ENCODE measurements at regions of chr11 and their contacts with region 1.

Region 1: GRCh38 chr11:9506489-9507276 is 45.9 kb downstream of the ZNF143 start:
- DNase-seq: peak; percentile 63 to 68 (median 65)
- H3K4me3 ChIP-seq: no peak overlapping the region
- H3K4me3 Mint-ChIP-seq: no peak overlapping the region
- H3K27ac ChIP-seq: no peak overlapping the region
- H3K27ac Mint-ChIP-seq: peak overlapping the region in 3 of 7 donors; percentile 62 to 73 (median 67)
- H3K4me1 ChIP-seq: peaks cover 10% of the 10 kb centered on the region
- H3K4me1 Mint-ChIP-seq: peaks cover 9 to 18% (median 12%) of the 10 kb centered on the region in 4 donors
- H3K27me3 ChIP-seq: no peaks in the 10 kb centered on the region
- H3K27me3 Mint-ChIP-seq: no peaks in the 10 kb centered on the region

Region 2: GRCh38 chr11:8911029-8911826 is 595.5 kb before region 1 on chr11 and contains the start of gene AKIP1:
- CTCF ChIA-PET with region 1: interaction called, 6 read pairs
- POLR2A ChIA-PET with region 1: interaction called, 3 read pairs
- intact Hi-C with region 1: loop called (anchors 1 kb)
- DNase-seq: peak; percentile 63 to 78 (median 65)
- H3K4me3 ChIP-seq: peak within 1 kb of the TSS; percentile 76 to 79
- H3K4me3 Mint-ChIP-seq: peak within 1 kb of the TSS; percentile 91 to 97 (median 92)
- H3K27ac ChIP-seq: peak within 1 kb of the TSS; percentile 52
- H3K27ac Mint-ChIP-seq: peak within 1 kb of the TSS; percentile 57 to 94 (median 89)
- H3K4me1 ChIP-seq: peaks cover 38% of the 10 kb centered on the region
- H3K4me1 Mint-ChIP-seq: peaks cover 27 to 60% (median 41%) of the 10 kb centered on the region in 4 donors
- H3K27me3 ChIP-seq: no peaks in the 10 kb centered on the region
- H3K27me3 Mint-ChIP-seq: no peaks in the 10 kb centered on the region
- total RNA-seq, gene AKIP1: 13.3 to 14.5 TPM

Region 3: DNA sequence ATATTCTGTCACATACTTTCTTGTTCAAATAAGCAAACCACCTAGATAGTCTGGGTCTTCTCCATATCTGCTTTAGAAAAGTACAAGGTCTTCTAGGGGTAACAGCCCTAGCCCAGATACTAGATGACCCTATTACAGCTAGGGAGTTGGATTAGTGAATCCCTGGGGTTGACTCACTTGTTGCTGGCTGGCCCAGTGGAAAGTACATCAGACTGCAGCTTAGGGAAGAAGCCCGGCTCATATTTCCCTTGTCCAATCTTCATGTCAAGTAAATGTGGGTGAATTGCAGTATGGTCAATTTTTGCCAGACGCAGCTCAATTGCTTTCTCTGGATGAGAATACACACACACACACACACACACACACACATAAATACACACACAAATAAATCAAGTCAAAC is 336.2 kb before region 1 on chr11:
- CTCF ChIA-PET with region 1: interaction called, 123 read pairs
- POLR2A ChIA-PET with region 1: no interaction called
- intact Hi-C with region 1: loop called (anchors 1 kb)
- DNase-seq: no peak
- H3K4me3 ChIP-seq: no peak overlapping the region
- H3K4me3 Mint-ChIP-seq: no peak overlapping the region
- H3K27ac ChIP-seq: no peak overlapping the region
- H3K27ac Mint-ChIP-seq: peak overlapping the region in 1 of 7 donors; percentile 69
- H3K4me1 ChIP-seq: no peaks in the 10 kb centered on the region
- H3K4me1 Mint-ChIP-seq: peaks cover 0 to 8% (median 4%) of the 10 kb centered on the region in 4 donors
- H3K27me3 ChIP-seq: no peaks in the 10 kb centered on the region
- H3K27me3 Mint-ChIP-seq: no peaks in the 10 kb centered on the region

Region 4: DNA sequence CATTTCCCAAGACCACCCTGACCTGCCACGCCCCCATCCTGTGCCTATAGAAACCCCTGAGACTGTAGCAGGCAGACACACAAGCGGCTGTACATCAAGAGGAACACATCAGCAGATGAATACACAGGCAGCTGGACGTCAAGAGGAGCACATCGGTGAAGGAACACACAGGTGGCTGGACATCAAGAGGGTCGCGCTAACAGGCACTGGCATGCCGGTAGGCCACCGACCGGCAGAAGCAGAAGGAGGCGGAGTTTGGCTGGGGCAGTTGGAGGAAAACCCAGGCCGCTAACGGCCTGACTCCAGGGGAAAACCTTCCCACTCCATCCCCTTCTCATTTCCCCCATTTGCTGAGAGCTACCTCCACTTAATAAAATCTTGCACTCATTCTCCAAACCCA is 127.6 kb before region 1 on chr11:
- CTCF ChIA-PET with region 1: no interaction called
- POLR2A ChIA-PET with region 1: no interaction called
- intact Hi-C with region 1: no loop called
- DNase-seq: no peak
- H3K4me3 ChIP-seq: no peak overlapping the region
- H3K4me3 Mint-ChIP-seq: no peak overlapping the region
- H3K27ac ChIP-seq: no peak overlapping the region
- H3K27ac Mint-ChIP-seq: peak overlapping the region in 1 of 7 donors; percentile 18
- H3K4me1 ChIP-seq: peaks cover 2% of the 10 kb centered on the region
- H3K4me1 Mint-ChIP-seq: peaks cover 0 to 4% (median 1%) of the 10 kb centered on the region in 4 donors
- H3K27me3 ChIP-seq: no peaks in the 10 kb centered on the region
- H3K27me3 Mint-ChIP-seq: peaks cover 0 to 1% of the 10 kb centered on the region in 2 donors

Region 5: GRCh38 chr11:9473408-9473807 is 33.3 kb before region 1 on chr11:
- CTCF ChIA-PET with region 1: interaction called, 16 read pairs
- POLR2A ChIA-PET with region 1: no interaction called
- intact Hi-C with region 1: no loop called
- DNase-seq: no peak
- H3K4me3 ChIP-seq: no peak overlapping the region
- H3K4me3 Mint-ChIP-seq: no peak overlapping the region
- H3K27ac ChIP-seq: no peak overlapping the region
- H3K27ac Mint-ChIP-seq: peak overlapping the region in 1 of 7 donors; percentile 13
- H3K4me1 ChIP-seq: no peaks in the 10 kb centered on the region
- H3K4me1 Mint-ChIP-seq: peaks cover under 1 to 11% (median 3%) of the 10 kb centered on the region in 4 donors
- H3K27me3 ChIP-seq: no peaks in the 10 kb centered on the region
- H3K27me3 Mint-ChIP-seq: no peaks in the 10 kb centered on the region

Region 6: DNA sequence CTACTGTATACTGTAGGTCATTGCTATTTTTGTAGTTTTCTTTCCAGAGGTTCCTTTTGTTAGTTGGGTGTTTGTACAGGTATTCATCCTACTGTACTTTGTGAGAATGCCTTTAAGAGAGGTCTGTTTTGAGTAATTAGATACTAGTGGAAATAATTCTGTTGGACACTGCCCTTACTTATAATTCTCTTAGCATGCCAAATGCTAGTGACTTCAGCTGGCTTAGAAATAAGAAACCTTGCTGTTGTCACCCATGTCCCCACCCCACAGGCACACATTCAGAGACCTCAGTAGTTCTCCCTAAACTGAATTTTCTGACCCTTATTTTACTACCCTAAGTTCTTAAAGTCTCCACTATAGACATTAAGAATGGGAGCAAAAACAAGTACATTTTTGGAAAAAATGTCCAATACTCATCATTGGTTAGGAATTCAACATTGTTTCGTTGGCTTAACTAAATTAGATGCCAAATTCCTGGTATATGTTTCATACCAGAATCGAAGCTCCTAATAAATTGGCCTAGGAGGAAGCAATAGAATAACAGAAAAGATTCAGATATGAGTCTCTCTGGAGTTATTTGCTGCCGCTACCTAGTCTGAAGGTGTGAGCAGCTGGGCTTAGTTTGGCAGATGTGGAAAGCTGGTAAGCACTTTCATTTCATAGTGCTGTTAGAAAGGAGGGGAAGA is 17.5 kb before region 1 on chr11:
- CTCF ChIA-PET with region 1: interaction called, 15 read pairs
- POLR2A ChIA-PET with region 1: no interaction called
- intact Hi-C with region 1: no loop called
- DNase-seq: no peak
- H3K4me3 ChIP-seq: no peak overlapping the region
- H3K4me3 Mint-ChIP-seq: no peak overlapping the region
- H3K27ac ChIP-seq: no peak overlapping the region
- H3K27ac Mint-ChIP-seq: peak overlapping the region in 5 of 7 donors; percentile 6 to 77 (median 29)
- H3K4me1 ChIP-seq: no peaks in the 10 kb centered on the region
- H3K4me1 Mint-ChIP-seq: peaks cover 0 to 7% (median 2%) of the 10 kb centered on the region in 4 donors
- H3K27me3 ChIP-seq: no peaks in the 10 kb centered on the region
- H3K27me3 Mint-ChIP-seq: no peaks in the 10 kb centered on the region

Region 7: DNA sequence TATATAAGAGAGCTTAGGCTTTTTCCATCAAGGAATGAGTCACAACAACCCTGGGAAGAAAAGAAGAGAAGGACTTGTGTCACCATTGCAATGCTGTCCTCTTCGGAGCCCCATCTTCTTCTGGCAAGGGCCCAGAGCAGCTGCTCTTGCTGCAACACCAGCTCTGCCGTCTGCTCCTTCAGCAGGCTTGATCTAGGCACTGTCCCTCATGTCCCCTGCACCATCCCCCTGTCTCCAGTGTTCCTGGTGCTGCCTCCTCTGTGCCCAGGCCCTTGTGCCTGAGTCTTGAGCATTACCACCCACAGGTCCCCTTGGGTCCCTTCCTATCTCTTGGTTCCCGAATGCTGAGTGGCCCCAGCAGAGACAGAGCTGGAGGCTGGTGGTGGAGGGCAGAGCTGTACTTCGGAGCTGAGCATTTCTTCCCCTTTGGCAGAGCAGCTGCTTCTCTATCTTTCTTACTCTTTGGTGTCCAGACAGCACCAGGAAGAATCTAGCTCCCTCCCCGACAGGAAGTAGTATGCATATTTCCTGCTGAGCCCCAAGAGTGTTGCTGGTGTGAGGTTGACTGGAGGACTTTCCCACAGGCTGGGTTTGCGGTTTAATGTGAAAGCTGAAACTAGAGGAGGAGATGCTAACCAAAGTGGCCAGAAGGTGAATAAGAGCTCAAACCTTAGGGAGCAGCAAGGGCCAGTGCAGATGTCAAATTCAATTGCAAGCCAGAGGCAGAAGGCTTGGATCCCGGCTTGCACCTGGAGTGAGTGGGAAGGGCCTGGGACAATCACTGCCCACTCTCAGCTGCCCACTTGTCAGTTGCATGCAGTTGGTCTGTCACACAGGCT is 94.6 kb after region 1 on chr11:
- CTCF ChIA-PET with region 1: interaction called, 17 read pairs
- POLR2A ChIA-PET with region 1: no interaction called
- intact Hi-C with region 1: no loop called
- DNase-seq: peak; percentile 45 to 80 (median 59)
- H3K4me3 ChIP-seq: peak overlapping the region; percentile 5 to 42
- H3K4me3 Mint-ChIP-seq: peak overlapping the region; percentile 64 to 88 (median 76)
- H3K27ac ChIP-seq: peak overlapping the region; percentile 62
- H3K27ac Mint-ChIP-seq: peak overlapping the region; percentile 53 to 95 (median 90)
- H3K4me1 ChIP-seq: peaks cover 19% of the 10 kb centered on the region
- H3K4me1 Mint-ChIP-seq: peaks cover 15 to 32% (median 20%) of the 10 kb centered on the region in 4 donors
- H3K27me3 ChIP-seq: no peaks in the 10 kb centered on the region
- H3K27me3 Mint-ChIP-seq: no peaks in the 10 kb centered on the region

Region 8: GRCh38 chr11:9626496-9627394 is 120.1 kb after region 1 on chr11:
- CTCF ChIA-PET with region 1: no interaction called
- POLR2A ChIA-PET with region 1: no interaction called
- intact Hi-C with region 1: no loop called
- DNase-seq: no peak
- H3K4me3 ChIP-seq: no peak overlapping the region
- H3K4me3 Mint-ChIP-seq: no peak overlapping the region
- H3K27ac ChIP-seq: no peak overlapping the region
- H3K27ac Mint-ChIP-seq: no peak overlapping the region
- H3K4me1 ChIP-seq: no peaks in the 10 kb centered on the region
- H3K4me1 Mint-ChIP-seq: no peaks in the 10 kb centered on the region
- H3K27me3 ChIP-seq: no peaks in the 10 kb centered on the region
- H3K27me3 Mint-ChIP-seq: peaks cover 0 to 3% of the 10 kb centered on the region in 2 donors